Left ventricle myocardium inferior (tissue), 1 donor: ENCODE measurements at regions of chr3 and their contacts with region 1.

Region 1: DNA sequence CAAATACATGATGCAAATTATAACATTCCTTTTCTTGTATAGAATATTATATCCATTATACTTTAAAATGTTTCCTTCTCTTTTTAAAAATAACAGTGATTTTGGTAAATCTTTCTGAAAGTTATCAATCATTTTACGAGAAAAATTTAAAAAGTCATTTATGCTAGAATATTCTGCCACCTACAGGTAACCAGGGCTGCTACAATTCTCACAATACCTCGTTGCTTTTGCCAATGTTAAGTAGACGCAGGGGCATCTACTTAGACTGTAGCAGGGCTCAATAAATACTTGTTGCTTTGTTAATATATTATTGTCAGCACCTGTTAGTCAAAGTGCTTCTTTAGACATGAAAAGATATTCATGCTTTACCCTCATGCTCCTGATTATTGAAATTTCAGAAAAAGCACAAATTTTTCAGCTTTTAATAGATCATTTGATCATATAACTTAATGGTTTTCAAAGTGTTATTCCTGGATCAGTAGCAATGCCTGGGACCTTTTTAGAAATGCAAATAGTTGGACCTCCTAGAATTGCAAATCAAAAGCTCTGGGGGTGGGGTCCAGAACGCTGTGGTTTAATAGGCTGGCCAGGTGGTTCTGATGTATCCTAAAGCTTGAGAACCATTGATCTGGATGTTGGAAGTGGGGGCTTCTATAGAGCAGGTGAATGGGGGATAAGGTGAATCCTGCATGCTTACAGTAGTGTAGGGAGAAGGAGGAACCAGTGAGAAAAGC is 223.6 kb upstream of the PDZRN3 start:
- DNase-seq: no peak
- H3K4me3 ChIP-seq: no peak overlapping the region
- H3K27ac ChIP-seq: no peak overlapping the region
- H3K4me1 ChIP-seq: no peaks in the 10 kb centered on the region
- H3K27me3 ChIP-seq: no peaks in the 10 kb centered on the region
- CTCF ChIP-seq: peak; percentile 77

Region 2: DNA sequence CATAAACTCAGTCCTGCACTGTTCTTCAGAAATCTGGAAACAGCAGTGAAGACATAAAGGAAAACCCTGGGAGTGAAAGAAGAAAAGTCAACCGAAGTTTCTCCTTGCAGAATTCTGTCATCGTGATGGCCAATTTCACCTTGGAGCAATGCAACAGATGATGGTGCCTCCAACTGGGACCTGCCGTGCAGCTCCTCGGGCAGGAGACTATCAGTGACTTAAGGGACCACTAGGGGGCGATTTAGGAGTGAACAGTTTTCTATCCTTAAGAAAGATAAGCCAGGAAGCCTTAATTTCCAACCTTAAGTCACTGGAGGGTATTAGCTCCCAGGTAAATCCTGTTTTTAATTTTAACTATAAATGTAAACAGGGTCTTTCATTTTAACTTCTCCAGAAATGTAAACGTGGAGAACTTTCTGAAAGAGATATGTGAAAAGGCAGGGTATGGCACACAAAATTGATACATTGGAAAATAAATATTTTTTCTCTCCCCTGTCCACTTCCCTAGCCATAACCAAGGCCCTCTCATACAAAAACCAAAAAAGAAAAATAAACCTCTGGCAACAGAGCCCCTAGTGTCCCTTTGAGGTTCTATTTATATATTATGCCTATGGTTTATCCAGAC is 339.9 kb before region 1 on chr3:
- intact Hi-C with region 1: loop called (anchors 5 kb)
- DNase-seq: no peak
- H3K4me3 ChIP-seq: no peak overlapping the region
- H3K27ac ChIP-seq: peak overlapping the region; percentile 68
- H3K4me1 ChIP-seq: peaks cover 88% of the 10 kb centered on the region
- H3K27me3 ChIP-seq: no peaks in the 10 kb centered on the region
- CTCF ChIP-seq: peak; percentile 78